ENCODE measurements at regions of chr1 and their contacts with region 1.

Region 1: GRCh38 chr1:168498159-168498631 is 45.6 kb downstream of the XCL2 start:
- DNase-seq: no peak
- ATAC-seq: no peak
- H3K4me3 ChIP-seq: no peak overlapping the region; a peak in 1 of 6 replicates
- H3K27ac ChIP-seq: peak overlapping the region; percentile 79
- H3K4me1 ChIP-seq: peaks cover 72% of the 10 kb centered on the region
- H3K27me3 ChIP-seq: no peaks in the 10 kb centered on the region
- CTCF ChIP-seq: no peak
- EP300 ChIP-seq: no peak
- POLR2A ChIP-seq: no peak
- RAD21 ChIP-seq: no peak

Region 2: GRCh38 chr1:168373869-168374268 is 124.3 kb before region 1 on chr1:
- CTCF ChIA-PET with region 1: no interaction called
- POLR2A ChIA-PET with region 1: no interaction called
- in situ Hi-C with region 1: no loop called
- intact Hi-C with region 1: no loop called
- DNase-seq: no peak
- ATAC-seq: no peak
- H3K4me3 ChIP-seq: no peak overlapping the region
- H3K27ac ChIP-seq: no peak overlapping the region
- H3K4me1 ChIP-seq: peaks cover 4% of the 10 kb centered on the region
- H3K27me3 ChIP-seq: no peaks in the 10 kb centered on the region
- CTCF ChIP-seq: no peak
- EP300 ChIP-seq: no peak
- POLR2A ChIP-seq: no peak
- RAD21 ChIP-seq: no peak

Region 3: DNA sequence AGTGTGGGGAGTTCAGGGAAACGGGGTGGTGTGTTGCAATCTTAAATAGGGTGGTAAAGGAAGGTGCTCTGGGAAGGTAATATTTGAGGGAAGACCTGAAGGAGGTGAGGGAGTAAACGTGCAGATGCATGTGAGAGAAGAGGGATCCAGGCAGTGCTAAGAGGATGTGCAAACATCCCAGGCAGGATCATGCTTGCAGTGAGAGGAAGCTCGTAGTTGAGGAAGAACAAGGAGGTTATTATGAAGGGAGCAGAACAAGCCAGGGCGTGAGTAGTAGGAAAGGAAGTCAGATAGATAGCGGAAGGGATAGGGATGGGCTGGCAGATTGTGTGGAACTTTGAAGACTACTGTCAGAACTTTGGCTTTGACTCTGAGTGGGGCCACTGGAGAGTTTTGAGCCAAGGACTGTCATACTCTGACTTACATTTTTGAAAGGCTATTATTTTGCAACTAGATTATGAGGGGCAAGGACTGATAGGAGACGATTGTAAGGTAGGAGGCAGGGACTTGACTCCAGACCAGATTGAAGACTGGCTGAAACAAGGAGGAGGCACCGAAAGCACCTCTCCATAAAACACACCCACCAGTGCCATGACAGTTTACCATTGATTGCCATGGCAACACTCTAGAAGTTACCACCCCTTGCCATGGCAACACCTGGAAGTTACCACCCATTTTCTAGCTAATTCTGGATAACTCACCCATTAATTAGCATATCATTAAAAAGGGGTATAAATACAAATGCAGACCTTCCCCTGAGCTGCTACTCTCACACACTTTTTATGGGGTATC is 21.4 kb before region 1 on chr1:
- CTCF ChIA-PET with region 1: no interaction called
- POLR2A ChIA-PET with region 1: interaction called, 7 read pairs
- in situ Hi-C with region 1: no loop called
- intact Hi-C with region 1: loop called (anchors 2 kb)
- DNase-seq: peak; percentile 91
- ATAC-seq: peak; percentile 96
- H3K4me3 ChIP-seq: no peak overlapping the region
- H3K27ac ChIP-seq: peak overlapping the region; percentile 58
- H3K4me1 ChIP-seq: peaks cover 78% of the 10 kb centered on the region
- H3K27me3 ChIP-seq: no peaks in the 10 kb centered on the region
- CTCF ChIP-seq: no peak
- EP300 ChIP-seq: peak in 1 of 2 experiments; percentile 71; a peak in 2 of 4 replicates
- POLR2A ChIP-seq: no peak
- RAD21 ChIP-seq: no peak

Region 4: GRCh38 chr1:168554603-168555483 is 56.6 kb after region 1 on chr1:
- CTCF ChIA-PET with region 1: no interaction called
- POLR2A ChIA-PET with region 1: no interaction called
- in situ Hi-C with region 1: no loop called
- intact Hi-C with region 1: loop called (anchors 5 kb)
- DNase-seq: no peak
- ATAC-seq: no peak
- H3K4me3 ChIP-seq: no peak overlapping the region
- H3K27ac ChIP-seq: peak overlapping the region; percentile 74
- H3K4me1 ChIP-seq: peaks cover 79% of the 10 kb centered on the region
- H3K27me3 ChIP-seq: no peaks in the 10 kb centered on the region
- CTCF ChIP-seq: no peak
- EP300 ChIP-seq: no peak
- POLR2A ChIP-seq: no peak
- RAD21 ChIP-seq: no peak

Measured in HepG2 (cell line).